Calu3 (cell line): ENCODE measurements at regions of chr10 and their contacts with region 1.

Region 1: GRCh38 chr10:110610308-110610774 is 33.8 kb upstream of the RBM20 start:
- DNase-seq: peak; percentile 61
- H3K4me3 Mint-ChIP-seq: no peak overlapping the region
- H3K27ac Mint-ChIP-seq: no peak overlapping the region
- H3K4me1 Mint-ChIP-seq: peaks cover 11% of the 10 kb centered on the region
- H3K27me3 Mint-ChIP-seq: peaks cover 12% of the 10 kb centered on the region
- CTCF ChIP-seq: peak; percentile 69

Region 2: GRCh38 chr10:109914966-109915365 is 695.4 kb before region 1 on chr10:
- CTCF ChIA-PET with region 1: no interaction called
- intact Hi-C with region 1: no loop called
- DNase-seq: peak; percentile 27
- H3K4me3 Mint-ChIP-seq: peak overlapping the region; percentile 27
- H3K27ac Mint-ChIP-seq: peak overlapping the region; percentile 83
- H3K4me1 Mint-ChIP-seq: peaks cover 48% of the 10 kb centered on the region
- H3K27me3 Mint-ChIP-seq: no peaks in the 10 kb centered on the region
- CTCF ChIP-seq: no peak

Region 3: DNA sequence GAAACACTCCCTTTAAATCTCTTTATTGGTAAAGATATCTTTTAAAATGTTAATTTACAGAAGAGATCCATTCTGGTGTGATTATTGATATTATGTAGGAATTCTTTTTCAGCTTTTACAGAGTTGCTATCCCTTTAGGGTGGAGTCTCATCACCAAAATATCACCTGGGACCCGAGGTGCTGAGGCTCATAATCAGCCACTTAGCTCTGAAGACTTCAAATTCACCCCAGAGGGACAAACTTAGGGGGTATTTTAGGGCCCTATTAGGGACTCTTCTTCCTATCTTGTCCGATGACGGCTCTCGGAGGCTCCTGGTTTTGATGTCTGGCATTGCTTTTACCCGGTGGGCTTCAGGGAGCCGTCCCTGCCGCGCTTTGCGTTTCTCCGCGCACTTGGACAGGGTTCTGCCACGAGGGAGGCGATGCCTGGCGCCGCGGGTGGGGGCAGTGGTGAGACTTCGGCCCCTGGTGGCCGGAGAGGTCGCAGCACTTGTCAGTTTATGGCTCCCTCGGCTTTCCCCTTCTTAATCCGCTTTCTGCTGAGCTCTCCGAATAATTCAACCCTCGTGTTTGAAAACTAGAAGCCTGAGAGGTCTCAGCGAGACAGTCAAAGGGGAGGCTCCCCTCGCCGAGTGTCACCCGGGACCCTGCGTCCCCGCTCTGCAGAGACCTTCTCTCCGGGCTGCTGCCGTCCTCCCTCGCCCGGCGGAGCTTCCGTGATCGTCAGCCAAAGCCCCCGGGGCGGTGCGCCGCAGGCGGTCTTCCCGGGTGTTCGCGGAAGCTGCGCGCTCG is 61.6 kb after region 1 on chr10:
- CTCF ChIA-PET with region 1: interaction called, 10 read pairs
- intact Hi-C with region 1: loop called (anchors 2 kb)
- DNase-seq: peak; percentile 76
- H3K4me3 Mint-ChIP-seq: peak overlapping the region; percentile 81
- H3K27ac Mint-ChIP-seq: no peak overlapping the region
- H3K4me1 Mint-ChIP-seq: no peaks in the 10 kb centered on the region
- H3K27me3 Mint-ChIP-seq: peaks cover 13% of the 10 kb centered on the region
- CTCF ChIP-seq: peak; percentile 75

Region 4: DNA sequence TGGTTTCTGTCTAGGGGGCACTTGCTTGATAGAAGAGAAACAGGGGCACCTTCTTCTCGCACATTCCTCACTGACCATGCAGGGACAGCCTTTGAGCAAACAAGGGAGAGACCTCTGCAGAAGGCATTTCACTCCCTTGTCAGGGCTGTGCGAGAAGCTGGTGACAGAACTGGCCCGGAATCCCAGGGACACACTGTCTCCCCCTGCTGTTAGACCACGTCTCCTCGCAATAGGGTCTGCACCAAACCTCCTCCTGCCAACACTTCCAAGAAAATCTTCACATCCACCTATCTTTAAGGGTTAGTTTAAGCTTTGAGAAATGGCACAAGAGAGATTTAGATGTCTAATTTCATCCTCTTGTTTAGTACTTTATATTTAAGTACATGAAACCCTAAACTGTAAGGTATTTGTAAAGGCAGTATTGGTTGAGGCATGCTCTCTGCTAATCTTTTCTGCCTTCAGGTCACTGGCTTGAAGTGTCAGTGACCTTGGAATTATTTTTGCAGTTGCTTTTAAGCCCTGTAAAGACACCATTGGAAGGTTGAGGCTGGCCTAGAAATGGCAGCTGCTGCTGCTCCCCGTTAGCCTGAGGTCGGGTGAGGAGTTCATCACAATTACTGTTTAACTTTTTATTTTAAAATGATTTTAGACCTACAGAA is 70.8 kb after region 1 on chr10:
- CTCF ChIA-PET with region 1: interaction called, 9 read pairs
- intact Hi-C with region 1: loop called (anchors 1 kb)
- DNase-seq: peak; percentile 50
- H3K4me3 Mint-ChIP-seq: no peak overlapping the region
- H3K27ac Mint-ChIP-seq: no peak overlapping the region
- H3K4me1 Mint-ChIP-seq: peaks cover 6% of the 10 kb centered on the region
- H3K27me3 Mint-ChIP-seq: peaks cover 16% of the 10 kb centered on the region
- CTCF ChIP-seq: peak; percentile 63

Region 5: DNA sequence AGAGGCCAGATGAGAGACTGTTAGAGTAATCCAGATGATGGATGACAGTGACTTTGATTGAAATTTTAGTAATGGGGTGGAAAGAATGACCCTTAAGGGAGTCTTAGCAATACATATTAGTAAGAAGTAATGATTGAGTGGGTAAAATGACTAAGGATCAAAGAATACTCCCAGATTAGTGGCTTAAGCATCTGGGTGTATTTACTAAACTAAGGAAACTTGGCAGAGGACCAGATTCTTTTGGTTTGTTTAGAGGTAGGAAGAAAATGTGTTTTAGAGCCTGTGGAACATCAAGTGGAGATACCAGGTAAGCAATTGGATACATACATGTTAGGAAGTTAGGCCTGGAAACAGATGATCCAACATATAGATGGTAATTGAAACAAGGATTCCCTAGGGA is 407.7 kb after region 1 on chr10:
- CTCF ChIA-PET with region 1: no interaction called
- intact Hi-C with region 1: no loop called
- DNase-seq: no peak
- H3K4me3 Mint-ChIP-seq: no peak overlapping the region
- H3K27ac Mint-ChIP-seq: no peak overlapping the region
- H3K4me1 Mint-ChIP-seq: no peaks in the 10 kb centered on the region
- H3K27me3 Mint-ChIP-seq: no peaks in the 10 kb centered on the region
- CTCF ChIP-seq: no peak